SK-N-SH (cell line): ENCODE measurements at regions of chr18 and their contacts with region 1.

Region 1: GRCh38 chr18:46134920-46135675 is 30.9 kb downstream of the HAUS1 start:
- DNase-seq: no peak
- H3K4me3 ChIP-seq: no peak overlapping the region
- H3K27ac ChIP-seq: no peak overlapping the region
- H3K4me1 ChIP-seq: no peaks in the 10 kb centered on the region
- H3K27me3 ChIP-seq: no peaks in the 10 kb centered on the region
- CTCF ChIP-seq: no peak
- EP300 ChIP-seq: no peak
- RAD21 ChIP-seq: no peak

Region 2: DNA sequence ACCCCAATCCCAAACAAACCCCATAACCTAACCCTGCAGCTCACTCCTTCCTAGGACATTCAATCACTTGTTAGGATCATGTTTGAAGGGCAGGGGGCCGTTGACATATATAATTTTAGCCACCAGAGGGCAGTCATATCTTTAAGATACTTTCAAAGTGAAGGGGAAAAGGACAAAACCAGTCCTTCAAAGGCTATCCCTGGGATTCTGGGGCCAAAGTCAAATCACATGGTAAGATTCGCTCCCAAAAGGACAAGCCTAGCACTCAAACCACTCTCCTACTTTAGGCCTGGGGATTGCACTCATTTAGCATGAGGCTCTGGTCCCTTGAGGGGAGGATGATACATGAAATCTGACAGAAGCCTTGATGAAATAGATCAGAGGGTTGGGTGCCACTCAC is 13.7 kb after region 1 on chr18:
- CTCF ChIA-PET with region 1: interaction called, 19 read pairs
- POLR2A ChIA-PET with region 1: no interaction called
- DNase-seq: peak; percentile 70
- H3K4me3 ChIP-seq: no peak overlapping the region; a peak in 1 of 4 replicates
- H3K27ac ChIP-seq: no peak overlapping the region
- H3K4me1 ChIP-seq: peaks cover 12 to 13% of the 10 kb centered on the region in 2 experiments; a peak in 1 of 4 replicates
- H3K27me3 ChIP-seq: no peaks in the 10 kb centered on the region
- CTCF ChIP-seq: peak; percentile 84
- EP300 ChIP-seq: no peak
- RAD21 ChIP-seq: peak; percentile 81

Region 3: GRCh38 chr18:46433121-46433826 is 298.2 kb after region 1 on chr18:
- CTCF ChIA-PET with region 1: no interaction called
- POLR2A ChIA-PET with region 1: no interaction called
- DNase-seq: no peak
- H3K4me3 ChIP-seq: no peak overlapping the region
- H3K27ac ChIP-seq: no peak overlapping the region; a peak in 1 of 4 replicates
- H3K4me1 ChIP-seq: peaks cover 0 to 42% of the 10 kb centered on the region in 2 experiments; a peak in 2 of 4 replicates
- H3K27me3 ChIP-seq: no peaks in the 10 kb centered on the region
- CTCF ChIP-seq: no peak
- EP300 ChIP-seq: no peak
- RAD21 ChIP-seq: no peak

Region 4: DNA sequence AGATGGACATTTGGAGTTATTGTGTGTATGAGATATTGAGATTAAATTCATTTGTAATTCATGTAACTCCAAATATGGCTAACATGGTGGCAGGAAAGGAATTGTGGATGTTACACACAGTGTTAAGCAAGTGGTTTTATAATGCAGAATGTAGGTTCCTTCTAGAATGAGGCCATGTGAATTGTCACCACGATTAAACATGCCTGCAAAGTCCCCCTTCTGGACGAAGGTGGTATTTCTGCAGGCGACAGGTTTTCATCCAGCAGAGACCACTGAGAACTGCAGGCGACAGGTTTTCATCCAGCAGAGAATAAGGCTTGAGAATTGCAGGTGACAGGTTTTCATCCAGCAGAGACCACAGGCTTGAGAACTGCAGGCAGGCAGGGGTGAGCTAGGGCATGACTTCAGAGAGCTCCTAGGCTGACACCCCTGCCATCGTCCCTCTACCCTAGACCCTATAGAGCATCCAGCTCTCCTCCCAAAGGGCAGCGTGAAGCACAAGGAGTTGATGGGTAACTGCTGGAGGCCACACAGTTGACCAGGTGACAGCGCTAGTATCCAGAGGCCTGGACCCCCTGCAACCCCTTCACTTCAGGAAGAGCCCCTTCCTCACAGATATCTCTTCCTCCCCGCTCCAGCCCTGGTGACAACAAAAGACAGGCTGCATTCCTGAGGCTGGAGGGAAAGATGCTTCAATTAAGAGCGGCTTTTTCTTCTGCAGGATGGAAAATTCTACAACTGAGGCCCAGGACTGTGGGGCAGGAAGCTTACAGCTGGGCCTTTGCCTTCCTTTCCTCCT is 346.1 kb after region 1 on chr18:
- CTCF ChIA-PET with region 1: no interaction called
- POLR2A ChIA-PET with region 1: no interaction called
- DNase-seq: peak; percentile 64
- H3K4me3 ChIP-seq: no peak overlapping the region
- H3K27ac ChIP-seq: peak overlapping the region in 1 of 2 experiments; percentile 59; a peak in 2 of 4 replicates
- H3K4me1 ChIP-seq: peaks cover 7 to 9% of the 10 kb centered on the region in 2 experiments; a peak in 2 of 4 replicates
- H3K27me3 ChIP-seq: no peaks in the 10 kb centered on the region; the same call in 1 of the 2 replicates
- CTCF ChIP-seq: peak; percentile 67
- EP300 ChIP-seq: no peak
- RAD21 ChIP-seq: peak; percentile 77

Region 5: GRCh38 chr18:46641917-46642316 is 506.8 kb after region 1 on chr18:
- CTCF ChIA-PET with region 1: no interaction called
- POLR2A ChIA-PET with region 1: no interaction called
- DNase-seq: no peak
- H3K4me3 ChIP-seq: no peak overlapping the region
- H3K27ac ChIP-seq: no peak overlapping the region
- H3K4me1 ChIP-seq: no peaks in the 10 kb centered on the region
- H3K27me3 ChIP-seq: peaks cover 29% of the 10 kb centered on the region; the same call in 1 of the 2 replicates
- CTCF ChIP-seq: no peak
- EP300 ChIP-seq: no peak
- RAD21 ChIP-seq: no peak